B cell (primary cell): ENCODE measurements at regions of chr7 and their contacts with region 1.

Region 1: GRCh38 chr7:22001345-22002004 is 55.8 kb upstream of the CDCA7L start:
- DNase-seq: peak; percentile 78
- ATAC-seq: peak; percentile 87
- H3K4me3 ChIP-seq: no peak overlapping the region
- H3K4me3 Mint-ChIP-seq: peak overlapping the region; percentile 11
- H3K27ac ChIP-seq: no peak overlapping the region
- H3K27ac Mint-ChIP-seq: no peak overlapping the region
- H3K4me1 ChIP-seq: peaks cover 0 to 6% of the 10 kb centered on the region in 2 donors
- H3K4me1 Mint-ChIP-seq: peaks cover 5% of the 10 kb centered on the region
- H3K27me3 ChIP-seq: peaks cover 0 to 3% (median 0%) of the 10 kb centered on the region in 4 experiments
- H3K27me3 Mint-ChIP-seq: peaks cover 20% of the 10 kb centered on the region
- CTCF ChIP-seq: peak; percentile 94

Region 2: GRCh38 chr7:21261627-21262594 is 739.6 kb before region 1 on chr7:
- CTCF ChIA-PET with region 1: interaction called, 11 read pairs
- POLR2A ChIA-PET with region 1: no interaction called
- intact Hi-C with region 1: loop called (anchors 1 kb)
- DNase-seq: peak; percentile 73
- ATAC-seq: peak; percentile 93
- H3K4me3 ChIP-seq: no peak overlapping the region
- H3K4me3 Mint-ChIP-seq: peak overlapping the region; percentile 14
- H3K27ac ChIP-seq: peak overlapping the region in 1 of 2 donors; percentile 28
- H3K27ac Mint-ChIP-seq: peak overlapping the region; percentile 67
- H3K4me1 ChIP-seq: peaks cover 12% of the 10 kb centered on the region in 2 donors
- H3K4me1 Mint-ChIP-seq: peaks cover 14% of the 10 kb centered on the region
- H3K27me3 ChIP-seq: no peaks in the 10 kb centered on the region
- H3K27me3 Mint-ChIP-seq: no peaks in the 10 kb centered on the region
- CTCF ChIP-seq: peak; percentile 73

Region 3: DNA sequence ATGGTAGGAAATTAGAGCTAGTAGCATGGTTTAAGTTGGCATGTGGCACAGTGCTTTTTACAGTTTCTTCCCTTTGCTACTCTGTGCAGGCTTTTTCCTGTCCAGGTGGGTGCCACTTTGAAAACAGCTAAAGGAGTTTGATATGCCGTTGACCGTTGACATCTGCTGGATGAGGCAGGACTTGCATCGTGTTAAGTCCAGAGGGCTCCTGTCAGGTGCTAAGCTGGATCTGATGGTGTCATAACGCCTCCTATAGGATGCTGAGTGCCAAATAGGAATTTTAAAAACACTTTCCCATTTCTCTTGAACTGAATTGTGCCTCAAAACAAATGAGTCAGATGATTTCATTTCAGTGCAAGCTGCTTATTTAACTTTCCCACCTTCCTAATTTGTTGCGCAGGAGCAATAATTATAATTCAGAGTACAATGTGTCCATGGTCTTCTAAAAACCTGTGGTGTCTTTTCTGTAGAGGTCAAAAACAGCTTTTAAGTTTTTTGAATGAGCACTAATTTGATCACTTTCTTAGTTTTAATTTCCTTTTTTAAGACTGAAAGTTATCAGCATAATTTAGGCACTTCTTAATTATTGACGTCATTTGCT is 234.1 kb before region 1 on chr7:
- CTCF ChIA-PET with region 1: interaction called, 4 read pairs
- POLR2A ChIA-PET with region 1: no interaction called
- intact Hi-C with region 1: loop called (anchors 5 kb)
- DNase-seq: peak; percentile 29
- ATAC-seq: peak; percentile 36
- H3K4me3 ChIP-seq: no peak overlapping the region
- H3K4me3 Mint-ChIP-seq: no peak overlapping the region
- H3K27ac ChIP-seq: no peak overlapping the region
- H3K27ac Mint-ChIP-seq: no peak overlapping the region
- H3K4me1 ChIP-seq: no peaks in the 10 kb centered on the region
- H3K4me1 Mint-ChIP-seq: no peaks in the 10 kb centered on the region
- H3K27me3 ChIP-seq: no peaks in the 10 kb centered on the region
- H3K27me3 Mint-ChIP-seq: peaks cover 20% of the 10 kb centered on the region
- CTCF ChIP-seq: peak; percentile 32

Region 4: DNA sequence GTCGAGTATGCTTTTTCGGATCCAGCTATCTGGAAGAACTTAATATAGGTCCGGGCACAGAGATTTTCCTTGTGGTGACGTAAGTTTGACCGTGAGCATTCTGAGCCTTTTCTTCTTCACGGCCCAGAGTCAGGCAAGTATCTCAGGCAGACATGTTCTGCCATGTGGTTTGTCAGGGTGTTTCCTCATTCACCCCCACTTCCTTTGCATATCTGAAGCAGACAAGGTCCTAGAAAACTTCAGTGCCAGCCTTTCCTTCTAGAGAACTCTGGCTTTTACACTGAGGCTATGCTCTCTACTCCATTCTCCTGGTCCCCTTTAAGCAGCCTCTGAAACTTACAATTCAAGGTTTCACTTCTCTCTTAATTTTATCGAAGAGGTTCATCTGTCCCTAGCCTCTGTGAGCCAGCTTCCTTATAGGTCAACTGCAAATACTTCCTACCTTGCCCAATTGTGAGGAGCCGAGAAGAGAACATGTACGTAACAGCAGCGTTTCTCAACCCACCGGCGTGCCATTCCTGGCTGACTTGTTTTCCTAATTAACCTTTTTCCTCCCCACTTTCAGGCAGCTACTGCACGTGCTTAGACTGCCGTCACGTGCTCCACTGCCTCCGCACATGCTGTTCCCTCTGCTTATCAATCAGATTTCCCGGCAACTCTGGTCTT is 103.1 kb before region 1 on chr7:
- CTCF ChIA-PET with region 1: interaction called, 3 read pairs
- POLR2A ChIA-PET with region 1: no interaction called
- intact Hi-C with region 1: loop called (anchors 2 kb)
- DNase-seq: peak; percentile 78
- ATAC-seq: peak; percentile 90
- H3K4me3 ChIP-seq: peak overlapping the region; percentile 12 to 55 (median 31)
- H3K4me3 Mint-ChIP-seq: peak overlapping the region; percentile 90
- H3K27ac ChIP-seq: peak overlapping the region; percentile 78 to 96
- H3K27ac Mint-ChIP-seq: peak overlapping the region; percentile 97
- H3K4me1 ChIP-seq: peaks cover 24 to 25% of the 10 kb centered on the region in 2 donors
- H3K4me1 Mint-ChIP-seq: peaks cover 33% of the 10 kb centered on the region
- H3K27me3 ChIP-seq: no peaks in the 10 kb centered on the region
- H3K27me3 Mint-ChIP-seq: no peaks in the 10 kb centered on the region
- CTCF ChIP-seq: no peak

Region 5: GRCh38 chr7:21945454-21946227 is 55.8 kb before region 1 on chr7 and contains the start of gene CDCA7L:
- CTCF ChIA-PET with region 1: interaction called, 8 read pairs
- POLR2A ChIA-PET with region 1: interaction called, 3 read pairs
- intact Hi-C with region 1: loop called (anchors 2 kb)
- DNase-seq: peak; percentile 96
- ATAC-seq: peak; percentile 80
- H3K4me3 ChIP-seq: peak within 1 kb of the TSS; percentile 74 to 95 (median 81)
- H3K4me3 Mint-ChIP-seq: peak within 1 kb of the TSS; percentile 97
- H3K27ac ChIP-seq: peak within 1 kb of the TSS; percentile 97 to 98
- H3K27ac Mint-ChIP-seq: peak within 1 kb of the TSS; percentile 99
- H3K4me1 ChIP-seq: peaks cover 56 to 63% of the 10 kb centered on the region in 2 donors
- H3K4me1 Mint-ChIP-seq: peaks cover 65% of the 10 kb centered on the region
- H3K27me3 ChIP-seq: no peaks in the 10 kb centered on the region
- H3K27me3 Mint-ChIP-seq: no peaks in the 10 kb centered on the region
- CTCF ChIP-seq: peak; percentile 17
- total RNA-seq, gene CDCA7L: 126 and 129 TPM in 2 replicates